Psoas muscle (tissue), 8 donors: ENCODE measurements at regions of chr15 and their contacts with region 1.

Region 1: DNA sequence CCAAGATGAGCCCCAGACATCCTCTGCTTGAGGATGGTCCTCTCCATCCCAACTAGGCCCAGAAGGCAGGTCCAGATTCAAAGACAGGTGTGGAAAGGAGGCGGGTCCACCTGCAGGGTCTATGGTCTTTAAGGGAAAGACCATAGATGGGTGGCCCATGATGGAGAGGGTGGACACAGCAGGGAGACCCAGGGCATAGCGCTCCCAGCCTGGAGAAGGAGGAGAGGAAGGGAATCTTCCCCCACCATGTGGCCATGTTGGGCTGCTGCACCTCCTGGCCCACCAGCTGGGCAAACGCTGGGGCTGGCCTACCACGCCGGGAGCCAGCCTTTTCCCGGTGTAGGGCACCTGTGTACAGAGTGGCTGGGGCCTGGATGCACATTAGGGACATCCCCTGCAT is 265.2 kb upstream of the TLE3 start:
- DNase-seq: peak in 1 of 2 donors; percentile 29
- ATAC-seq: peak; percentile 51 to 82 (median 69)
- H3K4me3 ChIP-seq: no peak overlapping the region
- H3K27ac ChIP-seq: no peak overlapping the region
- H3K4me1 ChIP-seq: no peaks in the 10 kb centered on the region
- H3K27me3 ChIP-seq: peaks cover 0 to 4% (median 2%) of the 10 kb centered on the region in 3 donors
- CTCF ChIP-seq: peak; percentile 60

Region 2: DNA sequence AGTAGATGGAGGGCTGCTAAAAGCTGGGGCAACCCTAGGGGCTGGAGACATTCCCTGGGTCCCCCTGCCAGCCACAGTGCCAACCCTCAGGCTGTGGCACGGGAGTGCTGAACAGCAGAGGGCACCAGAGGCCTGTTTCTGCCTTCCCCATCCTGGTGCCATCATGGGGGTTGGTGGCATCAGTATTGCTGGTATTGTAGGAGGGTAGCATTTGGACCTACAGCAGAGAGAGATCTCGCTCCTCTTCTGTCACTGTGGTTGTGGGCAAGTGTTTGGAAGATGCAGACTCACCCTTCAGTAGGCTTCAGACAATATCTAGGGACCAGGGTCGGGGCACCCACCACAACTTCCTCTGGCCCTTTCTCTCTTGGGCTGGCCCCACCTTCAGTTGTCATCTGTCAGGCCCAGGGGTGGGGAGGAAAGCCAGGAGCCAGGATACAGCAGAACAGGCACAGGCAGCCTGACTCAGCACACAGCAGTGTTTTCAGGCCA is 786.8 kb before region 1 on chr15:
- intact Hi-C with region 1: loop called in 1 of 2 experiments (anchors 5 kb)
- DNase-seq: peak; percentile 61 to 78
- ATAC-seq: peak; percentile 87 to 93 (median 92)
- H3K4me3 ChIP-seq: no peak overlapping the region
- H3K27ac ChIP-seq: no peak overlapping the region
- H3K4me1 ChIP-seq: no peaks in the 10 kb centered on the region
- H3K27me3 ChIP-seq: peaks cover 0 to 3% (median 0%) of the 10 kb centered on the region in 3 donors
- CTCF ChIP-seq: peak; percentile 75

Region 3: GRCh38 chr15:70036585-70037291 is 326.1 kb before region 1 on chr15:
- intact Hi-C with region 1: no loop called
- DNase-seq: no peak
- ATAC-seq: peak in 1 of 4 donors; percentile 29
- H3K4me3 ChIP-seq: no peak overlapping the region
- H3K27ac ChIP-seq: no peak overlapping the region
- H3K4me1 ChIP-seq: no peaks in the 10 kb centered on the region
- H3K27me3 ChIP-seq: peaks cover 0 to 15% (median 0%) of the 10 kb centered on the region in 3 donors
- CTCF ChIP-seq: no peak